Activated CD4-positive, alpha-beta memory T cell treated with anti-CD3 and anti-CD28 coated beads for 36 hours (primary cell): ENCODE measurements at regions of chr19 and their contacts with region 1.

Region 1: DNA sequence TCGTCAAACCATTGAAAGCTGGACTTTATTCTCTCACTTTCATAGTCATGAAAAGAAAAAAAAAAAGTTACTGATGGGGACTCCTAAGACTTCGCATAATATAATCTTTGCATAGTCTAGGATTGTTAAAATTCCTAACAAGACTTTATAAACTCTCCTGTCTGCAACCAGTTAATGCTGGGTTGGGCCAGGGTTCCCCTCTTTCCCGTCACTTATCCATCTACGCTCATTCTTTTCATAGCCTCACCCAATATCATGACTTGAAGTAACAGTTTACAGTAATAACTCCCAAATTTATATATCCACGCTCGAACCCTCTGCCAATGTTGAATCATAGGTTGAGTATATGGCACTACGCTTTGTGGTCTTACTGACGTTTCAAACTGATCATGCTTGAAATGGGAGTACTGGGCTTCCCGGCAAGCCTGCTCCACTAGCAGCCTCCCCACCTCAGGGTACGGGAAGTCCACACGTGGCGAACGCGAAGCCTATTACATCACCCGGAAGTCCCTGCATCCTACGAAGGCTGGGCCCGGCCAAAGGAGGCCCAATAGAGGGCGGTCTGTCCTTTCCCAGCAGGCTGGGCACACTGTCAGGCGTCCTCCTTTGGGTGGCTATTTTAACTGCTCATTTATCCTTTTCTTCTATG is 743 bp upstream of the ZNF460 start:
- DNase-seq: peak; percentile 91
- H3K4me3 Mint-ChIP-seq: no peak overlapping the region
- H3K27ac Mint-ChIP-seq: no peak overlapping the region
- H3K4me1 Mint-ChIP-seq: peaks cover 28% of the 10 kb centered on the region
- H3K27me3 Mint-ChIP-seq: no peaks in the 10 kb centered on the region

Region 2: DNA sequence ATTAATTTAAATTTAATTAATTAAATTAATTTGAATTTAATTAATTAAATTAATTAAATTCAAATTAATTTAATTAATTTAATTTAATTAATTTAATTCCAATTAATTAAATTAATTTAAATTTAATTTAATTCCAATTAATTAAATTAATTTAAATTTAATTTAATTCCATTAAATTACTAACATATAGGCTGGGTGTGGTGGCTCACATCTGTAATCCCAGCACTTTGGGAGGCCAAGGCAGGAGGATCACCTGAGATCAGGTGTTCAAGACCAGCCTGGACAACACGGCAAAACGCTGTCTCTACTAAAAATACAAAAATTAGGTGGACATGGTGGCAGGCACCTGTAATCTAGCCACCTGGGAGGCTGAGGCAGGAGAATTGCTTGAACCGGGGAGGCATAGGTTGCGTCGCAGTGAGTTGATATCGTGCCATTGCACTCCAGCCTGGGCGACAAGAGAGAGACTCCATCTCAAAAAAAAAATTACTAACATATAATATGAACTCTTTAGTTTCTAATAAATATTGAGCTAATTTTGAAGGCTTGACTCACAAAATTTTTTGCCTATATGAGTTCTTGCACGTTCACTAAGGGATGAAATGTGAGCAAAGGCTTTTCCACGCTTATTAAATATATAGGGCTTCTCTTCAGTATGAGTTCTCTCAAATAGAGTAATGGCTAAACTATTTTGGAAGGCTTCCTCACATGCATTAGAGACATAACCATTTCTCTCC is 168.8 kb before region 1 on chr19:
- CTCF ChIA-PET with region 1: no interaction called
- POLR2A ChIA-PET with region 1: no interaction called
- intact Hi-C with region 1: no loop called
- DNase-seq: no peak
- H3K4me3 Mint-ChIP-seq: no peak overlapping the region
- H3K27ac Mint-ChIP-seq: no peak overlapping the region
- H3K4me1 Mint-ChIP-seq: no peaks in the 10 kb centered on the region
- H3K27me3 Mint-ChIP-seq: peaks cover 2% of the 10 kb centered on the region

Region 3: GRCh38 chr19:57191141-57192076 is 88.1 kb before region 1 on chr19 and contains the start of gene ZNF264:
- CTCF ChIA-PET with region 1: no interaction called
- POLR2A ChIA-PET with region 1: no interaction called
- intact Hi-C with region 1: loop called (anchors 5 kb)
- DNase-seq: peak; percentile 92
- H3K4me3 Mint-ChIP-seq: peak within 1 kb of the TSS; percentile 85
- H3K27ac Mint-ChIP-seq: peak within 1 kb of the TSS; percentile 85
- H3K4me1 Mint-ChIP-seq: peaks cover 29% of the 10 kb centered on the region
- H3K27me3 Mint-ChIP-seq: peaks cover 3% of the 10 kb centered on the region
- total RNA-seq, gene ZNF264: 18.9 to 20.4 TPM

Region 4: GRCh38 chr19:57290970-57291369 is 11.4 kb after region 1 on chr19:
- CTCF ChIA-PET with region 1: no interaction called
- POLR2A ChIA-PET with region 1: no interaction called
- intact Hi-C with region 1: no loop called
- DNase-seq: no peak
- H3K4me3 Mint-ChIP-seq: no peak overlapping the region
- H3K27ac Mint-ChIP-seq: no peak overlapping the region
- H3K4me1 Mint-ChIP-seq: peaks cover 7% of the 10 kb centered on the region
- H3K27me3 Mint-ChIP-seq: no peaks in the 10 kb centered on the region

Region 5: DNA sequence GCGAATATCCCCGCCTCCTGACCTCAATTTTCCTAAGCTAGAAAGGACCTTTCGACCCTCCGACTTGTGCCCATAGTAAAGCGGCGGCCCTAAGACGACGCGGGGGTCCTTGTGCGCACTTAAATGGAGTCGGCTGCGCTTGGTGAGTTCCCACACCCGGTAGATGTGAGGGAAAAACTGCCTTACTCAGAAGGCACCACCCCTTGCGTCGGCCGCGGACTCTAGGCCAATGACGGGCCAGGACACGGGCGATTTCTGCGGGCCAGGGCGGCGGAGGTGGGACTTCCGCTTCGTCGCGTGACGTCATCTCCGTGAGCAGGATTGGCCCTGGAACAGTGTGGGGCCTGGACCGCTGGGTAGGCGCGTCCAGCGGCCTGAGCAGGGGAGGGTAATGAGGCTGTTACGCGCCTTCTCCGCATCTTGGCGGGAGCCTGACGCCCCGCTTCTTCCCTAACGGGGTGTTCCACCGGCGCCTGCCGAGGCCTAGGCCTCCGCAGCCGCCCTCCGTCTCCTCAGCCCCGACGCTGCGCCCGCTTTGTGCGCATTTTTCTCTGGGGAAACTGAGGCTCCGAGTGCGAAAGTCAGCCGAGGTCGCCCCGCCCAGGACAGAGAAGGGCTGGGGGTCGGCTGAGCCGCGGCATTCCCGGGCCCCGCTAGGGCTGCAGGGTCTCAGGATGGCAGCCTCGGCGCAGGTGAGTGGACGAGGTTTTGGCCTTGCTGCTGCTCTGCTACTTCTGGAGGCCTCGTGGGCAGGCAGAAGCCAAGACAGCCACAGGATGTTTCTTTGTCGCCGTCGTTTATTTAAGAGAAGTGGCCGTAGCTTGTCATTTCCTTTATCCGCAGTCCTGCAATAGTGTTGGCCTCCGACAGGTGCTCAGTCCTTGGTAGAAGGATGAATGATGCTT is 40.9 kb after region 1 on chr19 and contains the start of gene ZNF543:
- CTCF ChIA-PET with region 1: no interaction called
- POLR2A ChIA-PET with region 1: no interaction called
- intact Hi-C with region 1: loop called (anchors 1 kb)
- DNase-seq: peak; percentile 96
- H3K4me3 Mint-ChIP-seq: peak within 1 kb of the TSS; percentile 85
- H3K27ac Mint-ChIP-seq: peak within 1 kb of the TSS; percentile 83
- H3K4me1 Mint-ChIP-seq: peaks cover 24% of the 10 kb centered on the region
- H3K27me3 Mint-ChIP-seq: peaks cover 18% of the 10 kb centered on the region
- total RNA-seq, gene ZNF543: 4.0 to 4.3 TPM

Region 6: GRCh38 chr19:57362997-57363705 is 83.6 kb after region 1 on chr19 and contains the starts of genes TRAPPC2B and ZNF547:
- CTCF ChIA-PET with region 1: no interaction called
- POLR2A ChIA-PET with region 1: no interaction called
- intact Hi-C with region 1: loop called (anchors 1 kb)
- DNase-seq: peak; percentile 99
- H3K4me3 Mint-ChIP-seq: peak within 1 kb of the TSS; percentile 85
- H3K27ac Mint-ChIP-seq: peak within 1 kb of the TSS; percentile 92
- H3K4me1 Mint-ChIP-seq: peaks cover 14% of the 10 kb centered on the region
- H3K27me3 Mint-ChIP-seq: no peaks in the 10 kb centered on the region
- total RNA-seq, gene TRAPPC2B: 3.3 to 3.9 TPM
- total RNA-seq, gene ZNF547: 1.0 to 1.4 TPM

Region 7: GRCh38 chr19:57527136-57527881 is 247.8 kb after region 1 on chr19 and contains the start of gene ZNF549:
- CTCF ChIA-PET with region 1: no interaction called
- POLR2A ChIA-PET with region 1: no interaction called
- intact Hi-C with region 1: loop called (anchors 1 kb)
- DNase-seq: peak; percentile 94
- H3K4me3 Mint-ChIP-seq: peak within 1 kb of the TSS; percentile 85
- H3K27ac Mint-ChIP-seq: peak within 1 kb of the TSS; percentile 54
- H3K4me1 Mint-ChIP-seq: peaks cover 18% of the 10 kb centered on the region
- H3K27me3 Mint-ChIP-seq: no peaks in the 10 kb centered on the region
- total RNA-seq, gene ZNF549: 2.9 to 3.4 TPM

Region 8: GRCh38 chr19:58154679-58155648 is 875.4 kb after region 1 on chr19:
- CTCF ChIA-PET with region 1: no interaction called
- POLR2A ChIA-PET with region 1: no interaction called
- intact Hi-C with region 1: loop called (anchors 5 kb)
- DNase-seq: peak; percentile 98
- H3K4me3 Mint-ChIP-seq: peak overlapping the region; percentile 79
- H3K27ac Mint-ChIP-seq: peak overlapping the region; percentile 23
- H3K4me1 Mint-ChIP-seq: peaks cover 11% of the 10 kb centered on the region
- H3K27me3 Mint-ChIP-seq: no peaks in the 10 kb centered on the region